Posterior vena cava (tissue), 2 donors: ENCODE measurements at regions of chr16 and their contacts with region 1.

Region 1: GRCh38 chr16:24580665-24581064 is 41.3 kb downstream of the RBBP6 start:
- DNase-seq: no peak

Region 2: GRCh38 chr16:24689145-24689544 is 108.5 kb after region 1 on chr16:
- intact Hi-C with region 1: loop called in 1 of 2 experiments (anchors 10 kb)
- DNase-seq: no peak